WTC11 (cell line): ENCODE measurements at regions of chr2 and their contacts with region 1.

Region 1: DNA sequence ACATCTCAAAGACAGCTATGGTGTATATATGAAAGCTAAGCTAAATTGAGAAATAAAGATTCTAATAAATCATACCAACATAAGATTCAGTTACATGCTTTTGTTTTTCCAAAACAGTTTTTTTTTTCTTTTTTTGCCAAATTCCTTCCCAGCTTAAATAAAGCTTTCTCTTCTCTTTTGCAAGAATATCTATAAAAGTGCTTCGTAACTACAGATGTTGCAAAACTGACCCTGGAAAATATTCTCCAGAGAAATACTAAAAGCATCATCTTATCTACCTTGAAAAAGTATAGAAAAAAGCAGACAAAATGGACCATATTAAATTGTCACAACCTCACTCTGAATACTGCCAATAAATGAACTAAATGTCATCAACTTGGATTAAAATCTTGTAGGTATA is 38.7 kb downstream of the FANCL start:
- DNase-seq: no peak
- ATAC-seq: no peak
- H3K4me3 Mint-ChIP-seq: no peak overlapping the region
- H3K27ac Mint-ChIP-seq: 0 out of 2 replicates have a peak overlapping the region, but pooled peaks have one; percentile 45
- H3K4me1 Mint-ChIP-seq: peaks cover 20% of the 10 kb centered on the region
- H3K27me3 Mint-ChIP-seq: no peaks in the 10 kb centered on the region
- CTCF ChIP-seq: no peak

Region 2: GRCh38 chr2:58702302-58702885 is 500.0 kb after region 1 on chr2:
- CTCF ChIA-PET with region 1: no interaction called
- POLR2A ChIA-PET with region 1: interaction called, 12 read pairs
- DNase-seq: no peak
- ATAC-seq: peak; percentile 86
- H3K4me3 Mint-ChIP-seq: no peak overlapping the region
- H3K27ac Mint-ChIP-seq: no peak overlapping the region
- H3K4me1 Mint-ChIP-seq: peaks cover 11% of the 10 kb centered on the region
- H3K27me3 Mint-ChIP-seq: no peaks in the 10 kb centered on the region
- CTCF ChIP-seq: no peak